Caco-2 (cell line): ENCODE measurements at regions of chr17 and their contacts with region 1.

Region 1: GRCh38 chr17:21119247-21119918 is 7.4 kb upstream of the DHRS7B start:
- DNase-seq: peak; percentile 69 to 75
- H3K4me3 ChIP-seq: no peak overlapping the region; the same call in 1 of the 2 replicates
- H3K4me3 Mint-ChIP-seq: peak overlapping the region; percentile 22
- H3K27ac Mint-ChIP-seq: no peak overlapping the region
- H3K4me1 ChIP-seq: peaks cover 7% of the 10 kb centered on the region; the same call in 1 of the 2 replicates
- H3K4me1 Mint-ChIP-seq: peaks cover 4% of the 10 kb centered on the region
- H3K27me3 ChIP-seq: no peaks in the 10 kb centered on the region
- H3K27me3 Mint-ChIP-seq: no peaks in the 10 kb centered on the region
- CTCF ChIP-seq: peak; percentile 90 to 97

Region 2: DNA sequence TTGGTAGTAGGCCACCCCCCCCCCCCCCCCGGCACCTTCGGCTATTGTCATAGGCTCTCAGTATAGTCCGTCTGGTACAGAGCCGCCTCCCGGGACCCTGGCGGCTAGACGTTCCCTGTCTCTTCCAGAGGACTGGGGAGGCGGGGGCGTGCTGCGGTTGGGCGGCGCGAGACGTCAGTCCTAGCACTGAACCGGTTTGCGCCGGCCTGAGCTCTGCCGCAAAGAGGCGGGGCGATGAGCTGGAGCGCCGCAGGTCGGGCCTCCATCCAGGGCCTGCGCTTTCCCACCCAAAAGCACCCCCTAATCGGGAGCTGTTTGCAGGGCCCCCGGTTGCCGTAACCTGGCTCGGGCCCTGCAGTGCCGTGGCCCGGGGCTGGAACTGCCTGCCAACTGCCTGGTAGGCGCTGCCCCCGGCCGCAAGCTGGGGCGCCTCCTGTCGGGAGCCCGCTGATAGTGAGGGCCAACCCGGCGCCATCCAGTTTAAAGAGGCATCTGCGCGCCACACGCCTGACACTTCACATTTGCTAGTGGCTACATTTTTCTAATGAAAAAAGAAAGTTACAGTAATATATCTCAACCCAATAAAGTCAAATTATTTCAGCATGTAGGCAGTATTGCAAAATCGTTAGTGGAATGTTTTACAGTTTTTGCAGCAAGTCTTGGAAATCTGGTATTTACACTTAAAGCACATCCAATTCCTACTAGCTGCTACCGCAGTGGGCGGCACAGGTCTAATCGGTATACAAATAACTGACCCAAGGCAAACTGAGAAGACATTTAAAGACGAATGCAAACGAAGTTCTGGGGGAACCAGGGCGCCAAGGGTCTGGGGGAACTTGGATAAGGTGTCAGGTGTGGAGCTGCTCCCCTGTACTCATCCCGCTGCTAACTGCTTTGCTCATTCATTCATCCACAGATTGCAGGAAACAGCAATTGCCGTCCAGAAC is 75.8 kb before region 1 on chr17:
- CTCF ChIA-PET with region 1: interaction called, 10 read pairs
- POLR2A ChIA-PET with region 1: interaction called, 3 read pairs
- intact Hi-C with region 1: no loop called
- DNase-seq: peak; percentile 99
- H3K4me3 ChIP-seq: peak overlapping the region; percentile 87
- H3K4me3 Mint-ChIP-seq: peak overlapping the region; percentile 80
- H3K27ac Mint-ChIP-seq: peak overlapping the region; percentile 71
- H3K4me1 ChIP-seq: no peaks in the 10 kb centered on the region
- H3K4me1 Mint-ChIP-seq: peaks cover 9% of the 10 kb centered on the region
- H3K27me3 ChIP-seq: no peaks in the 10 kb centered on the region
- H3K27me3 Mint-ChIP-seq: no peaks in the 10 kb centered on the region
- CTCF ChIP-seq: peak; percentile 86 to 89

Region 3: DNA sequence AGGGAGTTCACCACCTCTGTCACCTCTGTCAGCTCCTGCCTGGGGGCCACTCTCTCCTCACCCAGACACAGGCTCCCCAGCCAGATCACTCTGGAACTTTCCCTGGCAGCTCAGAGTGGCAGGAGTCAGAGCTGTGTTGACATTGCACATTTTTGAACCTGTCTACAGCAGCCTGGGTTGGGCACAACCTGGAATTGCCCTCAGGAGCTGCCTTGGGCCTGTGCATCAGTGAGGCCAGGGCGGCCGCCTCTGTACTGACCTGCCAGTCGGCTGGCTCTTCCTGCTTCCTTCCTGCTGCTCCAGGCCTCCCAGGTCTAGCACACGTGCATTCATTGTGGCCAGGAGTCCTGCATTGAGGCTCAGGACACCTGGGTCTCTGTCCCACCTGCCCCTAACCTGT is 108.7 kb after region 1 on chr17:
- CTCF ChIA-PET with region 1: no interaction called
- POLR2A ChIA-PET with region 1: no interaction called
- intact Hi-C with region 1: loop called (anchors 5 kb)
- DNase-seq: peak; percentile 52 to 71
- H3K4me3 ChIP-seq: no peak overlapping the region
- H3K4me3 Mint-ChIP-seq: no peak overlapping the region
- H3K27ac Mint-ChIP-seq: no peak overlapping the region
- H3K4me1 ChIP-seq: no peaks in the 10 kb centered on the region
- H3K4me1 Mint-ChIP-seq: peaks cover 6% of the 10 kb centered on the region
- H3K27me3 ChIP-seq: no peaks in the 10 kb centered on the region
- H3K27me3 Mint-ChIP-seq: no peaks in the 10 kb centered on the region
- CTCF ChIP-seq: no peak

Region 4: GRCh38 chr17:21457051-21458026 is 338.0 kb after region 1 on chr17:
- CTCF ChIA-PET with region 1: no interaction called
- POLR2A ChIA-PET with region 1: no interaction called
- intact Hi-C with region 1: loop called (anchors 5 kb)
- DNase-seq: peak; percentile 88 to 96
- H3K4me3 ChIP-seq: no peak overlapping the region
- H3K4me3 Mint-ChIP-seq: no peak overlapping the region
- H3K27ac Mint-ChIP-seq: no peak overlapping the region
- H3K4me1 ChIP-seq: no peaks in the 10 kb centered on the region
- H3K4me1 Mint-ChIP-seq: peaks cover 7% of the 10 kb centered on the region
- H3K27me3 ChIP-seq: no peaks in the 10 kb centered on the region
- H3K27me3 Mint-ChIP-seq: peaks cover 18% of the 10 kb centered on the region
- CTCF ChIP-seq: peak; percentile 90 to 94